Activated naive CD4-positive, alpha-beta T cell treated with anti-CD3 and anti-CD28 coated beads for 36 hours (primary cell): ENCODE measurements at regions of chr12 and their contacts with region 1.

Region 1: GRCh38 chr12:6423267-6424007 is 21.3 kb upstream of the CD27 start:
- DNase-seq: peak; percentile 88
- H3K4me3 Mint-ChIP-seq: peak overlapping the region; percentile 52
- H3K27ac Mint-ChIP-seq: peak overlapping the region; percentile 51
- H3K4me1 Mint-ChIP-seq: peaks cover 48% of the 10 kb centered on the region
- H3K27me3 Mint-ChIP-seq: no peaks in the 10 kb centered on the region

Region 2: DNA sequence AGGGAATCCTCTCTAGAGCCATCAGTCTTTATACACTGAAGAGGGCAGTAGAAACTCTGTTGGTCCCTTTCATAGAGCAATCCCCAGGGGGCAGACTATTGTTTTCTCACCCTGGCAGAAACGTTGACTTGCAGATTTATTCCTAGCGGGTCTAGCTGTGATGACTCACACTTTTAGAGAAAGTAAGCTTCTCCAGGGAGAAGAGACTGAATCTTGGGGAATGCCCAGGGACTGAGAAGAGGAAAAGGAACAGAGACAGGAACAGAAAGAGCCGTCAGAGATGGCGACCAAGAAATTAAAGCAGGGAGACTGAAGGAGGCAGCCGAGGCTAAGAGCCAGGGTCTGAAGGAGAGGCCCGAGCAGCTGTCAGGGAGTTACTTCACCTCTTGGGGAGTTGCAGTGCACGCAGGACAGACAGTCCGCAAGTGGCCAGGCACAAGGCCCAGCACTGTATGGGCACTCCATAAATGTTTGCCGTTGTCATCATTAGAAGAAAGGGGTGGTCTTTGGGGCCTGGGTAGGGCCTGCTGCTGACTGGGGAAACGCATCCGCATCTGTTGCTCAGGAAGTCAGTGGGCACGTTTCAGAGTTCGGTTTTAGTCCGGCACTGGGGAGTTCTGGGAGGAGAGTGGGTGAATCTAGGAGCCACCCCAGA is 100.0 kb before region 1 on chr12:
- CTCF ChIA-PET with region 1: interaction called, 5 read pairs
- intact Hi-C with region 1: loop called (anchors 1 kb)
- DNase-seq: peak; percentile 55
- H3K4me3 Mint-ChIP-seq: peak overlapping the region; percentile 40
- H3K27ac Mint-ChIP-seq: peak overlapping the region; percentile 83
- H3K4me1 Mint-ChIP-seq: peaks cover 39% of the 10 kb centered on the region
- H3K27me3 Mint-ChIP-seq: no peaks in the 10 kb centered on the region

Region 3: DNA sequence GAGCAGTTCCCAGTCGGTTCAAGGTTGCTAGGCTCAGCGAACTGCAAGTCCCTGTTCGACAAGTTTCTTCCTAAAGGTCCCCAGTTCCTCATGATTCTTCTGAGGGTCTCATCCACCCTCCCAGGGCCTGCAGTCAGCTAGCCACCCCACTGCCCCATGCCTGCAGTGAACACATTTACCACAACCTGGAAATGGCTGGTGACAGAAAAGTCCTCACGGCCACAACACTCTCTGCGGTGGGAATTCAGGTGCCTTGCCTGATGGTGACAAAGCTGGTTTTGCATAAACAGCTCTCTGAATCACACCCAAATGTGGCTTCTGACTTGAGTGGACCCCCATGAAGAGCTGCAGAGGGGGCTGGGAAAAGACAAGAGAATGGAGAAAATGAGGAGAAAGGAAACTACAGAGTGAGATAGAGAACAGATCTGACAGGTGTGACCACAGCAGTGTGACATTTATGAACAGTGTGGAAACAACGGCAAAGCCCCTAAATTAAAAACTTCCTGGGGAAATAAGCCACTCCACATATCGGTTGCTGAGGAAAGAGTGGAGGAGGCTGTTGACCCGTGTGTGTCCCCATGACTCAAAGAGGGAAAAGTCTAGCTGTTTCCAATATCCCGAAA is 20.0 kb after region 1 on chr12:
- CTCF ChIA-PET with region 1: interaction called, 73 read pairs
- intact Hi-C with region 1: loop called (anchors 1 kb)
- DNase-seq: peak; percentile 79
- H3K4me3 Mint-ChIP-seq: peak overlapping the region; percentile 92
- H3K27ac Mint-ChIP-seq: peak overlapping the region; percentile 98
- H3K4me1 Mint-ChIP-seq: peaks cover 74% of the 10 kb centered on the region
- H3K27me3 Mint-ChIP-seq: no peaks in the 10 kb centered on the region

Region 4: DNA sequence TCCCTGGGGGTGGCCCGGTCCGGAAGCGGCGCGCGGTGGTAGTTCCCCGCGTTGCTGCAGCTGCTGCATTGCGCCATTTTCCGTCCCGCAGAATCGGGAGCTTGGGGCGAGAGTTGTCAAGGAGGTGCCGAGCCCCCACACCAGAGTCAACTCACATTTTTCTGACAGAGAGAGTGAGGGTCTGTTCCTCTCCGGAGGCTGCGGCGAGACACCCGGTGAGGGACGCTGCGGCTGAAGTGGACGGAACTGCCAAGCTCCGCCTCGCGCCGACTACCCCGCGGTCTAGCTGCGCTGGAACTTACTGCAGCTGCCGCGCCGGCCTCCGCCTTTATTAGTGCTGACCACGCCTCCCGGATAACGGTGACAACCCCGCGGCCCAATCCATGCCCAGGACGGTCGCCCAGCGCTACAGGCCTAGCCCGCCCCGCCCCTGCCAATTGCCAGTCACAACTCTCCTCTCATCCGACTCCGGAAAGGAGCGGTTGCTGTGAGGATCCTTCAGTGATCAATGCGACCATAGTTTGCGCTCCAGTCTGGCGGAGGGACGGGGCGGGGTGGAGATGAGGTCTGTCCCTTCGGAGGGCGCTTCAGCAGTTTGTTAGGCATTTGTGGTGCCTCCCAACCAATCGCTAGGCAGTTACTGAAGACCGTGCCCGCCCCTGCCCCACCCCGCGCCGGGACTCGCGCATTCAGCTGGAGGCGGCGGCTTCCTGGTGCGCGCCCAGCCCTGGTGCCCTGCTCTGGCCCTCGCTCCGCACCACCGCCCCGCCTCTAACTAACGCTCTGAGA is 47.1 kb after region 1 on chr12 and contains the start of gene VAMP1:
- CTCF ChIA-PET with region 1: interaction called, 223 read pairs
- intact Hi-C with region 1: loop called (anchors 1 kb)
- DNase-seq: peak; percentile 99
- H3K4me3 Mint-ChIP-seq: peak within 1 kb of the TSS; percentile 91
- H3K27ac Mint-ChIP-seq: peak within 1 kb of the TSS; percentile 90
- H3K4me1 Mint-ChIP-seq: peaks cover 53% of the 10 kb centered on the region
- H3K27me3 Mint-ChIP-seq: no peaks in the 10 kb centered on the region
- total RNA-seq, gene VAMP1: 31.9 to 33.5 TPM

Region 5: DNA sequence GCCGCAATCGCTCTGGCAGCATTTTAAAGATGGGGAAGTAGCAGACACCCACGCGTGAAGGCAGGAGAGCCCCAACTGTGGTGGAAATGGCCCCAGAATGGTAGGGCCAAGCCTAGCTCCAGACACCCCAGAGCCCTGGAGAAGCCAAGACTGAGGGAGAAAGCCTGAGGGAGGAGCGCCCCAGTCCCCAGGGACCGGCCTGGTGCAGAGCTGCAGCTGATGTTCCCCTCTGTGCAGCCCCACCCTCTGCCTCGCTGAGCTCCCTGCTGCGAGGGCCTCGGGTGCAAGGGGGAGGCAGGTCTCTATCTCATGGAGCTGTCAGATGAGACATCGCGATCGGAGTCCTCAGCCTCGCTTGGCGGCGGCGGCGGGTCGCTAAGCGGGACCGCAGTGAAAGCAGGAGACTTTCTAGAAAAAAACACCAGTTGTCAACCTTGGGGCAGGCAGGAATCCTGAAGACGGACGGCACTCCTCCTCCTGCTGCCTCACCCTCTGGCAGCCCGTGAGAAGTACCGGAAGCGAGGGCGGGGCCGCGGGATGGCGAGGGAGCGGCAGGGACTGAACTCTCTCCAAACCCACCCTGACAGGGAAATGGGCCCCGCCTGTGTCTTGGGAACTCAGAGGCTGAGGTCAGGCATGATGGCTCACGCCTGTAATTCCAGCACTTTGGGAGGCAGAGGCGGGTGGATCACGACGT is 116.9 kb after region 1 on chr12:
- CTCF ChIA-PET with region 1: interaction called, 35 read pairs
- intact Hi-C with region 1: loop called (anchors 1 kb)
- DNase-seq: peak; percentile 75
- H3K4me3 Mint-ChIP-seq: peak overlapping the region; percentile 59
- H3K27ac Mint-ChIP-seq: peak overlapping the region; percentile 63
- H3K4me1 Mint-ChIP-seq: peaks cover 57% of the 10 kb centered on the region
- H3K27me3 Mint-ChIP-seq: no peaks in the 10 kb centered on the region

Region 6: GRCh38 chr12:6563448-6564050 is 140.1 kb after region 1 on chr12:
- CTCF ChIA-PET with region 1: interaction called, 26 read pairs
- intact Hi-C with region 1: no loop called
- DNase-seq: peak; percentile 79
- H3K4me3 Mint-ChIP-seq: no peak overlapping the region
- H3K27ac Mint-ChIP-seq: peak overlapping the region; percentile 36
- H3K4me1 Mint-ChIP-seq: peaks cover 39% of the 10 kb centered on the region
- H3K27me3 Mint-ChIP-seq: no peaks in the 10 kb centered on the region